GM23248 (cell line): ENCODE measurements at regions of chr6 and their contacts with region 1.

Region 1: DNA sequence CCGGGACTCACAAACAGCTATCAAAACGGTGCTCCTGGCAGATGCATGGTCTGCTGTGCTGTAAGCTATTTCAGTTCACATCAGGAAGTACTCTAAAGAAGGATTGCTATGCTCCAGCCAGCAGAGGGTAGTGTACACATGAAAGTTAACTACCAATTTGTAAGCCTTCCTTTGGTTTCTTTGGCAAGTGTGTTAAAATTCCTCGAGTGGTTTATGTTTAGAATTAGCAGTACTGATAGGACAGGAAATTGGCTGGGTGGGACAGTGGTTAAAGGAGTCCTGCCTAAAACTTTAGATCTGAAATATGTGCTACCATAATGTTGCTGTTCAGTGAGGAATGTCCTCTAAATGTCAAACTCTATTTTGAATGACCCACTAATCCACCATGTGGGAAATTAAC is 47.4 kb downstream of the TRMT11 start:
- DNase-seq: peak; percentile 89
- H3K4me3 ChIP-seq: no peak overlapping the region
- H3K27ac ChIP-seq: no peak overlapping the region
- H3K4me1 ChIP-seq: peaks cover 7% of the 10 kb centered on the region
- H3K27me3 ChIP-seq: no peaks in the 10 kb centered on the region

Region 2: GRCh38 chr6:126657561-126658175 is 624.0 kb after region 1 on chr6:
- in situ Hi-C with region 1: loop called (anchors 25 kb)
- DNase-seq: peak; percentile 73
- H3K4me3 ChIP-seq: no peak overlapping the region
- H3K27ac ChIP-seq: no peak overlapping the region
- H3K4me1 ChIP-seq: peaks cover 27% of the 10 kb centered on the region
- H3K27me3 ChIP-seq: no peaks in the 10 kb centered on the region

Region 3: DNA sequence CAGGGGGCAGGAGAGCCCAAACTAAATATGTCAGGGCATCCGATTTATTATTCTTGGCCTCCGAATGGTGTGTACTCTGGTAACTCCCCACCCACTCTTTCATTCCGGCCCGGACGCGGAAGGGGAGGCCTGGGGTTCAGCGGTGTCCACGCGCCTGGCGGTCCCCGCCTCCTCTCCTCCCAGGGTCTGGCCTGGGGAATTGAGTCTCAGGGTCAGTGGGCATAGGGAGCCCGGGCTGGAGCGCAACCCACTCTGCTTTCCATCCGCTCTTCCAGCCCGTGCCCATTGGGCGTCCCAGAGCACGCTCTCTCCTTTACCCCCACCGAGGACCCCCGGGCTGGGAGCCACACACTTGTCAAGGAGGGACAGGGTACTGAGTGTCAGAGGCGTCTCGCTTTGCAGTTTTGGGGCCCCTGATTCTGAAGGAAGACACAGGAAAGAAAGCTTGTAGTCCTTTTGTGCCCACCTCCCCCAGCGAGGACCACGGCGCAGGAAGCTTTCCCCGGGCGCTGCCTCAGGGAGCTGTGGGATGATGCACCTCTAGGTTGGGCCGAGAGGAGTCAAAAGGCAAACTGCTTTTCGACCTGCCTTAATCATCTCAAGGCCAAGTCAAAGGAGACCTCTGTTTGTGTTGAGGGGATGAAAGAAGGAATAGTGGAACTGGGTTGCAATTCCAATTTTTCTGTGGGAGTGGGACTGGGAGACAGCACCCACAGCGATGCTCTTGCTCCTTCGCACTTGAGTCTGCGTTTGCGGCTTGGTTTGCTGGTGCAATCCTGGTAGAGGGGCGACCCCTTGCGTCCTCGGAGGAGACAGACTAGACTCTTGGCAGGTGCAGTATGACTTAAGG is 1087.3 kb after region 1 on chr6:
- in situ Hi-C with region 1: loop called (anchors 25 kb)
- DNase-seq: peak; percentile 91
- H3K4me3 ChIP-seq: peak overlapping the region; percentile 36; the same call in 1 of the 2 replicates
- H3K27ac ChIP-seq: no peak overlapping the region
- H3K4me1 ChIP-seq: 0 out of 2 replicates have a peak, but pooled peaks cover 7% of the 10 kb centered on the region
- H3K27me3 ChIP-seq: no peaks in the 10 kb centered on the region